Esophagus muscularis mucosa (tissue), 4 donors: ENCODE measurements at regions of chr6 and their contacts with region 1.

Region 1: DNA sequence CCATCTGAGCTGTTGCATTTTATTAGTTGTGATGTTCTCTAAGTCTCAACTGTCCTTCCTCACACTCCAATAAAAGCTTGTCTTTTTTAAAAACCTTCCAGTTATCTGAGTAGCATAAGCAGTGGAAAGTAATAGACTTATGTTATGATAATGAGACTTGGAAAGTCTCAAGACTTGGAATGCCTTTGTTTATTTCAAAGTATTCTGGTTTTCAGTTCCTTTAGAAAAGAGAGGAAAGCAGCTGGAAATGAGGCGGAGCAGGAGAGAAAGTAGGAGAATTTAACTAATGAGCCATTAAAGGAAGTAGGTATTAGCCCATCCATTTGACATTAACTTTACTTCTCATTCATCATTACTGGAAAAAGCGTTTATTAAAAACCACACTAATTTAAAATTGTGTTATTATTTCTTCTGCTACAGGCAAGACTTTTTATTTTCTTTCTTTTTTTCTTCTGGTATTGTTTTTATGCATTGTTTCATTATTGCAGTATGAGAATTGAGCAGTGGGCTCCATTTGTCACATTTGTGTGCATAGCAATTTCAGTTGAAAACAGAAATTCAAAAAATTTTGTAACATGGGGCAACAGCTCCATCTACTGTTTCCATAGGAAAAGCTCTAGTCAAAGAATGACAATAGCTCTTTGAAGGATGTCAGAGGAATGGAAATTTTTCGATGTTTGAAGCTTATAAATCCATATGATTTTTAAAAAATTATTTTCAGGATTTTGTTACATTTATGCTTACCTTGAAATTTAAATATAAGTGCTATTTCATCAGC is 194.8 kb downstream of the COL9A1 start:
- DNase-seq: no peak
- H3K4me3 ChIP-seq: peak overlapping the region in 2 of 4 donors; percentile 12 to 13
- H3K27ac ChIP-seq: no peak overlapping the region
- H3K4me1 ChIP-seq: peaks cover 0 to 9% (median 8%) of the 10 kb centered on the region in 4 donors
- H3K27me3 ChIP-seq: no peaks in the 10 kb centered on the region
- CTCF ChIP-seq: peak; percentile 67 to 71 (median 69)
- EP300 ChIP-seq: no peak
- POLR2A ChIP-seq: no peak

Region 2: DNA sequence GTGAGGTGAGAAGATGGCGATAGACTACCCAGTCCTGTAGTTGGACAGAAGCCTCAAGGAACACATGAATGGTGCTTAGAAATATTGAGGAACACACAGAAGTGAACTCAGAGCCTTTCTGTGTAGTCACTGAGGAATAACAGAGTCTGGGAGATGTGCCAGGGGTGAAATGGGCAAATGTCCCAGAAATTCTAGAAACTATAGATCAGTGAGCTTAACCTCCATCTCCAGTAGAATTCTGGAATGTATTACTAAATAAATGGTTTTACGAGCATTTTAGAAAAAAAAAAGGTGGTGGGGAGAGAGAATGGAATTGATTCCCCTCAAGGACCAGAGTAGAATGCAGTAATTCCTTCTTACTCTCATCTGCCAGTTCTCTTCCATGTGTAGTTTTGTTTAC is 691.3 kb before region 1 on chr6:
- intact Hi-C with region 1: no loop called
- DNase-seq: no peak
- H3K4me3 ChIP-seq: no peak overlapping the region
- H3K27ac ChIP-seq: no peak overlapping the region
- H3K4me1 ChIP-seq: peaks cover 0 to 5% (median 0%) of the 10 kb centered on the region in 4 donors
- H3K27me3 ChIP-seq: no peaks in the 10 kb centered on the region
- CTCF ChIP-seq: no peak
- EP300 ChIP-seq: no peak
- POLR2A ChIP-seq: no peak

Region 3: GRCh38 chr6:69719602-69720193 is 388.3 kb before region 1 on chr6:
- intact Hi-C with region 1: loop called (anchors 10 kb)
- DNase-seq: no peak
- H3K4me3 ChIP-seq: no peak overlapping the region
- H3K27ac ChIP-seq: no peak overlapping the region
- H3K4me1 ChIP-seq: no peaks in the 10 kb centered on the region
- H3K27me3 ChIP-seq: no peaks in the 10 kb centered on the region
- CTCF ChIP-seq: peak in 1 of 3 experiments; percentile 21
- EP300 ChIP-seq: no peak
- POLR2A ChIP-seq: no peak

Region 4: DNA sequence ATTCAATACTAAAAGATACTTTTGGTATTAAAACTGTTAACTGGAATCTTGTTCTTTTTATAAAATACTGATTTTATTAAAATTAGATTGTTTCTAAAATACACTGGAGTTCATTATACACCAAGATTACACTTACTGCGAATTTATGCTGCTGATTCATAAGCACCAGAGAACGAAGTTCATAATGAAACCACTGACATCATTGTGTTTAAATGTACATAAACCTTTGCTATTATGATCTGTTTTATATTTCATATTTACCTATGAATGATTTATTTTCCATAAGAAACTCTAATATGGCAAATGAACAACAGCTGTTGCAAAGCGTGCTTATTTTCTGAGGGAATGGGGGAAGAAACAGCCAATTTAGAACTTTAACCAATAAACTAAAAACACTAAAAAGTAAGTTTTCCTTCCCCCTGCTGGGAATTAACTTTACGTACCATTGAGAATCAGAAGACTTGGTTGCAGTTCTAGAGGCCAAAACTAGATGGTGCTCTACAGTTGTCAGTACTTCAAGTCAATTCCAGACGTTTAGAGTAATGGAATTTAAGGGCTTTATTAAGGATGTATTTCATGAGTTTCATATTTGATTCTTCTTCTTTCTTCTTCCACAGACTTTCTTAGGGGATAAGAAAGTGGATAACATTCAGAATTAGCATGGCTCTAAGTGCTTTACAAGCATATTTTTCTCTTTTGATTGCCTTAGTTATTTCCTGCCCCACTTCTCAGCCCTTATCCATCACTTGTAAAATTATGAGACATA is 272.4 kb before region 1 on chr6:
- intact Hi-C with region 1: loop called (anchors 5 kb)
- DNase-seq: no peak
- H3K4me3 ChIP-seq: no peak overlapping the region
- H3K27ac ChIP-seq: no peak overlapping the region
- H3K4me1 ChIP-seq: peaks cover 0 to 7% (median 0%) of the 10 kb centered on the region in 4 donors
- H3K27me3 ChIP-seq: no peaks in the 10 kb centered on the region
- CTCF ChIP-seq: peak; percentile 70 to 86 (median 84)
- EP300 ChIP-seq: no peak
- POLR2A ChIP-seq: no peak